Posterior cingulate gyrus (tissue), 11 donors: ENCODE measurements at regions of chr14 and their contacts with region 1.

Region 1: DNA sequence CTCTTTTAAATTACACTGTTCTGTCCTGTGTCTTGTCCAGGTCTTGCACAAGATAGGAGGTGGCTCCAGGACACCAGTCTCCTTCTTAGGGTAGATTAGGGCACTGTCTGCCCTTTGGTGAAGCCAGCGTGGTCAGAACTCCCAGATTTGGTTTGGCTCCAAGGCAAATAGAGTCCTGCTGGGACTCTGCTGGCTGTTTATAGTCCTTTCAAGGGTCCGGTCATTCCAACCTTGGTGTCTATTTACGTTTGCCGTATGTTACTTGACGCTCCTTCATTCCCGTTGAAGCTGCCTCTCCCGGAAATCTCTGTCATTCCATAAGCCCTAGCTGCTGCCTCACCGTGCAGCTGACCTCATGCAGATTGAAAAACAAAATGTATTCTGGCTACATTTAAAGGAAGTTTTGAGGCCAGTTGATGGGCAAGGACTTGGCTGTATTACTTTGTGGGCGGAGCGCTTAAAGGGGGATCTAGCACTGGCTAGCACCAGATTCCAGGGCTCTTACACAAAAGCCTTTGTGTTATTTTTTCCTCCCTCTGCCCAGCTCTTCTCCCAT is 180.6 kb downstream of the AKAP6 start:
- DNase-seq: peak; percentile 43 to 96 (median 76)

Region 2: DNA sequence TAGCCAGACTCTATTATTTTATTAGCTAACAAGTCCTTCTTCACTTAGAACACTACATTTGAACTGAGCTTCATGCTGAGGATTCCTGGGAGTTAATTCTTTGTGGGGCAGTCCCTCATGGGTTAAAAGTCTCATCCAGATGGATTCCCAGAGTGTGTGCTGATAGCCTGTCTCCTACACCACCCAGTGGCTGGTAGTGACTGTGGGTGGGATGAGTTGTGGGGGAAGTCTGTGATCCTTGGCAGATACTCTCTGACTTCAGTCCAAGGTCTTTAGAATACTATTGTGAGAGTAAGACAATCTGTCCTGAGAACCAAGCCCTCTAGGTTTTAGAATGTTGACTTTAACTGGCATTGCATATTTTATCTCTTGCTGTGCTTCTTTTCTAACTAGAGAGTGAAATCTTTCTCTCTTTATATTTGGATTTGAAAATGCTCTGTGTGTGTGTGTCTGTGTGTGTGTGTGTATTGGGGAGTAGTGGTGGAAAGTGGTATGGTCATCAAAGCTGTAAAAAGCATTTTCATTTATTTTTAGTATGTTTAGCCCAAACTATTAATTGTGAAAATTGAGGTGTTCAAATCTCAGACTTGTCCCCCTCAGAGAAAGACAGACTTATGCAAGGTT is 143.3 kb before region 1 on chr14:
- intact Hi-C with region 1: loop called (anchors 10 kb)
- DNase-seq: peak in 9 of 10 donors; percentile 32 to 90 (median 55)